Dorsolateral prefrontal cortex (tissue), 120 donors: ENCODE measurements at regions of chr2 and their contacts with region 1.

Region 1: GRCh38 chr2:232994446-232994845 is 18.6 kb downstream of the NGEF start:
- DNase-seq: peak in 2 of 10 donors; percentile 27 to 39
- H3K4me3 ChIP-seq: no peak overlapping the region
- H3K27ac ChIP-seq: no peak overlapping the region
- H3K27me3 ChIP-seq: no peaks in the 10 kb centered on the region
- CTCF ChIP-seq: no peak

Region 2: GRCh38 chr2:232951891-232952290 is 42.6 kb before region 1 on chr2:
- intact Hi-C with region 1: no loop called
- DNase-seq: no peak
- H3K4me3 ChIP-seq: no peak overlapping the region
- H3K27ac ChIP-seq: no peak overlapping the region
- H3K27me3 ChIP-seq: peaks cover 0 to 4% (median 0%) of the 10 kb centered on the region in 45 donors
- CTCF ChIP-seq: no peak

Region 3: DNA sequence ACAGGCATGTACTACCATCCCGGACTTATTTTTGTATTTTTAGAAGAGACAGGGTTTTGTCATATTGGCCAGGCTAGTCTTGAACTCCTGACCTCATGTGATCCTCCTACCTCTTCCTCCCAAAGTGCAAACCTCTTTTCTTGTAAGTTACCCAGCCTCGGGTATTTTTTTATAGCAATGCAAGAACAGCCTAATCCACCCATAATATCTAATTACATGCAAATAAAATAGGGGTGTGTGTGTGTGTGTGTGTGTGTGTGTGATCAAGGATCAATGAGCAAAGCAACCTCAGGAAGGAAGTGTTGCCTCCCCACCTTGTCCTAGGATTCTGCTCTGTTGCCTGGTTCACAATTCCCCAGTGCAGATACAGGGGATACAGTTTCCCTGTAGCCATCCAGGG is 27.0 kb before region 1 on chr2:
- intact Hi-C with region 1: loop called in 1 of 2 experiments (anchors 1 kb)
- DNase-seq: no peak
- H3K4me3 ChIP-seq: no peak overlapping the region
- H3K27ac ChIP-seq: no peak overlapping the region
- H3K27me3 ChIP-seq: no peaks in the 10 kb centered on the region
- CTCF ChIP-seq: no peak

Region 4: DNA sequence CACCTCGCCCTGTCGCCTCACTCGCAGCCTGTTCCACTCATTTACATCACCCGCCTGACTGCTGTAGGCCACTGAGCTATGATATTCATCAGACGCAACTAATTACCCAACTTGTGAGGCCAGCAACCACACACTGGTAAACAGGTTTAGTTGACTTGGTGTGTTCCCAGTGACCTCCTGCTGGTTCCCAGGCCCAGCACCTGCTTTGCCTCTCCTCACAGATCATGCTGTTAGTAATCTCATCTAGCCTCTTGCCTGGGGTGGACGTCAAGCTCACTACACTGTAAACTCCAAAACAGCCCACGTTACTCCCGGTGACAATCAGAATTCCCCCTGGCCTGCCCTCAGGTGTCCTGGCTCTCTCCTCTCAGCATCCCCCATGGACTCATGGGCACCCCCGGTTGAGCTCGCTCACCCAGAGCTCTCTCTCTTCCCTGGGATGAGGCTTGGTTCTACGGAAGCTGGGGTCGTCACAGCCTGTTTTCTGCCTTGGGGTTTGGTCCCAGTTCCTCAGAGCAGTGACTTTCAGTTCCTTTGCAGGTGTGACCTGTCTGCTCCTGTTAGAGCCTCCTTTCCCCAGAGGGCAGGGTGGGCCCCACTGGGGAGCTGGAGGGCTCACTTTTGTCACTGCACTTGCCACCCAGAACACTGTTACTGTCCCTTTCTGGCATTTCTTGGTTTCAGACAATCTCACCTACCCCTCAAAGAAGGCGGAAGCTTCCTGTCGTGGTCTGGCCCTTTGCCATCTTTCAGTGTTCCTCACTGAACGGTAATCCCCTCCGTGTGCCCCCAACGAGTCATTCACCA is 105.9 kb after region 1 on chr2:
- intact Hi-C with region 1: no loop called
- DNase-seq: no peak
- H3K4me3 ChIP-seq: no peak overlapping the region
- H3K27ac ChIP-seq: no peak overlapping the region
- H3K27me3 ChIP-seq: no peaks in the 10 kb centered on the region
- CTCF ChIP-seq: no peak

Region 5: GRCh38 chr2:233242231-233242927 is 247.9 kb after region 1 on chr2:
- intact Hi-C with region 1: no loop called
- DNase-seq: peak in 3 of 10 donors; percentile 11 to 40 (median 31)
- H3K4me3 ChIP-seq: peak overlapping the region in 7 of 59 donors; percentile 2 to 26 (median 20)
- H3K27ac ChIP-seq: peak overlapping the region in 30 of 59 donors; percentile 5 to 72 (median 50)
- H3K27me3 ChIP-seq: no peaks in the 10 kb centered on the region
- CTCF ChIP-seq: no peak